H1 (cell line): ENCODE measurements at regions of chr9 and their contacts with region 1.

Region 1: GRCh38 chr9:134099123-134099787 is 31.4 kb upstream of the BRD3 start:
- DNase-seq: peak; percentile 39 to 92
- H3K4me3 ChIP-seq: no peak overlapping the region
- H3K27ac ChIP-seq: no peak overlapping the region
- H3K4me1 ChIP-seq: no peaks in the 10 kb centered on the region
- H3K27me3 ChIP-seq: peaks cover 0 to 3% (median 0%) of the 10 kb centered on the region in 4 experiments; a peak in 1 of 7 replicates
- CTCF ChIP-seq: peak; percentile 14 to 91 (median 70)
- EP300 ChIP-seq: no peak
- POLR2A ChIP-seq: no peak
- RAD21 ChIP-seq: peak; percentile 86 to 90

Region 2: DNA sequence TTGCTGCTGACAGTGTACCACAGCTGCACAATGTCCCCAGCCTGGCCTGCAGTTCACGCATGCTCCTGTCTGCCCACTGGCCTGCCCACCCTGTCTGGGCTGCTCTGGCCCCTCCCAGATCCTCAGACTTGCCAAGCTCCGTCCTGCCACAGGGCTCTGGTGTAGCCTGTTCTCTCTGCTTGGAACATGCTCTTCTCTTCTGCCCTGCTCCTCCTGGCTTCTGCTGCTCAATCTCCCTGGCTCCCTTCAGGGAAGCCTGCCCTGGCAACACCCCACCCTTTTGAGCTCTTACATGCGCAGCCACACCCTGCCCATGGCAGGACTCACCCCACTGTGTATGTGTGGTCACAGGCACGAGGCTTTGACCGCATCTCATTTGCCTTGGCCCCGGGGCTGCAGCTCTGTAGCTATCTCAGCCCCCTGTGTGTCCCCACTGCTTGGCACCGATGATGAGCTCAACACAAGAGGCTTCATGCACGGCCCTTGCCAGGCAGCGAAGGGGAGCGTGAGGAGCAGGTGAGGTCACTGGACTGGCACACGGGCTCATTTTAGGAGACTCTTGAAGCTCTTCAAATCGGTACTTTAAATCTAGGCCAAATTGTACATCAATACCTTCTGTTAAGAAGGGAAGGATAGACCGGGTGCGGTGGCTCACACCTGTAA is 11.1 kb before region 1 on chr9:
- CTCF ChIA-PET with region 1: interaction called, 14 read pairs
- POLR2A ChIA-PET with region 1: no interaction called
- DNase-seq: no peak
- H3K4me3 ChIP-seq: no peak overlapping the region
- H3K27ac ChIP-seq: no peak overlapping the region
- H3K4me1 ChIP-seq: no peaks in the 10 kb centered on the region
- H3K27me3 ChIP-seq: no peaks in the 10 kb centered on the region
- CTCF ChIP-seq: no peak
- EP300 ChIP-seq: no peak
- POLR2A ChIP-seq: no peak
- RAD21 ChIP-seq: no peak

Region 3: GRCh38 chr9:134111064-134111463 is 11.8 kb after region 1 on chr9:
- CTCF ChIA-PET with region 1: interaction called, 12 read pairs
- POLR2A ChIA-PET with region 1: no interaction called
- DNase-seq: no peak
- H3K4me3 ChIP-seq: no peak overlapping the region
- H3K27ac ChIP-seq: no peak overlapping the region
- H3K4me1 ChIP-seq: no peaks in the 10 kb centered on the region
- H3K27me3 ChIP-seq: no peaks in the 10 kb centered on the region
- CTCF ChIP-seq: no peak
- EP300 ChIP-seq: no peak
- POLR2A ChIP-seq: no peak
- RAD21 ChIP-seq: no peak